Lower lobe of right lung (tissue), 2 donors: ENCODE measurements at regions of chr4 and their contacts with region 1.

Region 1: DNA sequence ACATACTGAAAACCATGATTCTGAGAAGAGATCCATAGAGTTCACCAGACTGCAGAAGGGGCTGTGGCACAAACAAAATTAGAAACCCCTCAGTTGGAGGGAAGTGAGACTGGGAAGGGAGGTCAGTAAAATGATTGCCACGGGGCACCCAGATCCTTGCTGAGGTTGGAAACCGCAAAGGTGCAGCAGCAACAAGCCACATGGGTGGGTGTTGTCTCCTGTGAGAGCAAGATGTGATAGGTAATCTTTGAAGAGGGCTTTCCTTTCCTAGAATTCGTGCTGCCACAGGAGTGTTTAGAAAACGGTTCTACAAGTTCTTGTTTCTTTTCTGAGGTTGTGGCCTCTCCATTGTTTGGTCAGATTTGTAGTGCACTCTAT is 85.5 kb downstream of the NFKB1 start:
- DNase-seq: no peak
- ATAC-seq: no peak
- H3K4me3 ChIP-seq: no peak overlapping the region
- H3K27ac ChIP-seq: no peak overlapping the region
- H3K4me1 ChIP-seq: no peaks in the 10 kb centered on the region
- H3K27me3 ChIP-seq: no peaks in the 10 kb centered on the region
- CTCF ChIP-seq: no peak

Region 2: DNA sequence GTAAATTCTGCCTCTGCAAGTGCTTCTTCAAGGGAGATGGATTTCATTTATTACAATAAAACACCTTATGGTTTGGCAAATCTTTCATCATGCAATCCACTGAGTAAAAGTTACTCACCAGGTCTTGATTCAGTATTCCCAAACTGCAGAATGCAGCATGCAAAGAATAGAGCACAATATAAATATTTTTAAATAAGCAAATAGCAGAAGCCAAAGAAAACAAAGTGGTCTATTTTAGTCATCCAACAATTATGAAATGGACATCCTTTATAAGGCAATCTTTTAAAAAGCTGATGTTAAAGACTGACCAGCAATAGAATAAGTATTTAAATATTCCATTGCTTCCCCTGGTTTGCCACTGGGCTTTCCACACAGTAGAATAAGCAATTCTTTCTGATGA is 300.8 kb before region 1 on chr4:
- intact Hi-C with region 1: no loop called
- DNase-seq: no peak
- ATAC-seq: no peak
- H3K4me3 ChIP-seq: no peak overlapping the region
- H3K27ac ChIP-seq: no peak overlapping the region
- H3K4me1 ChIP-seq: no peaks in the 10 kb centered on the region
- H3K27me3 ChIP-seq: no peaks in the 10 kb centered on the region
- CTCF ChIP-seq: no peak

Region 3: GRCh38 chr4:102449751-102450352 is 136.8 kb before region 1 on chr4:
- intact Hi-C with region 1: loop called (anchors 10 kb)
- DNase-seq: no peak
- ATAC-seq: peak; percentile 67 to 83
- H3K4me3 ChIP-seq: no peak overlapping the region
- H3K27ac ChIP-seq: no peak overlapping the region
- H3K4me1 ChIP-seq: peaks cover 4% of the 10 kb centered on the region
- H3K27me3 ChIP-seq: no peaks in the 10 kb centered on the region
- CTCF ChIP-seq: peak; percentile 61